ENCODE measurements at regions of chr3 and their contacts with region 1.

Region 1: DNA sequence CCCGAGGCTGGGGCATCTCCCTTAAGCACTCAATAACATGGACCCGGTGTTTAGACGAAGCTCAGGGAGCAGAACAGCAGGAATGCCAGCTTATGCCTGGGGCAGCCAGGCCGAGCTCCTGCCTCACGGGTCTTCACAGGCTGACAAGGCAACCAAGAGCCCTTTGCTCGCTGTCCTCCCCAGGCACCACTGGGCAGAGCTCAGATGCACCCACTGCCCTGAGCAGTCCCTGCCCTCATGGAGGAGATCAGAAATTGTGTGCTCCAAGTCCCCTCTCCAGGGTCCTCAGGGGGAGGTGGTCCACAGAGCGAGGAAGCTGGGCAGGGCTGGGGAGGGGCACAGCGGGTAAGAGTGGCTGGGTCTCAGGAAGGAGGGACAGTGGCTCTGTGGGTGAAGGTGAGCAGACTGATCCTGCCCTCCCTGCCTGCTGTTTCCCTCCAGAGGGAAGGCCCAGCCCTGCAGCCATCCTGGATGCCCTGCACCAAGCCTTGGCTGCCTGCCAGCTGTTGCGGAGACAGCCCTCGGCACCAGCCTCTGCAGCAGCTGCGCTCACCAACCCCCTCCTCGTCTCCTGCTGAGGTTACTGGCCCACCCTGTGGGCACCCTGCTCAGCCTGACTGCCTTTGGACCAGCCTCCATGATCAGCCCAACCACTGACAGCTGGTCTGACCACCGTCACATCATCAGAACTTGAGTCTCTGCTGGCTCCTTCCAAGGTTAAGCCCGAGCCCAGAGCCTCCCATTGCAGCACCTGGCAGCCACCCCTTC is 21.1 kb upstream of the GP9 start:
- DNase-seq: no peak
- ATAC-seq: peak in 6 of 8 donors; percentile 25 to 70 (median 46)
- H3K4me3 ChIP-seq: no peak overlapping the region
- H3K27ac ChIP-seq: no peak overlapping the region
- H3K4me1 ChIP-seq: peaks cover 0 to 5% (median 0%) of the 10 kb centered on the region in 9 donors
- H3K27me3 ChIP-seq: peaks cover 0 to 4% (median 0%) of the 10 kb centered on the region in 7 donors
- CTCF ChIP-seq: no peak

Region 2: DNA sequence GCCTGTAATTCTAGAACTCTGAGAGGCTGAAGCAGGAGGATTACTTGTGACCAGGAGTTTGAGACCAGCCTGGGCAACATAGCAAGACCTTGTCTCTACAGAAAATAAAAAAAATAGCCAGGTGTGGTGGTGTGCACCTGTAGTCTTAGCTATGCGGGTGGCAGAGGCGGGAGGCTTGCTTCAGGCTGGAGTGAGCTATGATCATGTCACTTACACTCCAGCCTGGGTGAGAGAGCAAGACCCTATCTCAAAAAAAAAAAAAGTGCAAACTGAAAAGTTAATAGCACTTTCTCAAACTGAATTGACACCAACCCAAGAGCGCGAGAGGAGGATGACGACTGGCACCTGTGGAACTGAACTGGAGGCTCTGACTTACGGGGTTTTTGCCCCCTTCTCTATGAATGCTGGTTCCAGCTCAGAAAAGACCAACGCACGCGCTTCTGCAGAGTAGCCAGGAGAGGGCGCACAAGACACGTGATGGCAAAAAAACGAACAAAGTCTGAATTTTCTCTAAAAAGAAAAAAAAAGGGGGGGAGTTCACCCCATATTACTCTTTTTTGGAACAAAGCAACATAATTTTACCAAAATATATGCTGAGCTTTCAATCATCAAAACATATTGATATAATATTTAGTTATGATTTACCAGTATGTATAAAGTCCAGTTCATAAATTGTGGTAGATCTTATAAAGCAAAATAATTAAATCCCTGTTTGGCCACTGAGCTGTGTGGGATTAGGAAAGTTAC is 69.3 kb before region 1 on chr3:
- intact Hi-C with region 1: no loop called
- DNase-seq: peak; percentile 29 to 32
- ATAC-seq: peak in 6 of 8 donors; percentile 32 to 66 (median 45)
- H3K4me3 ChIP-seq: no peak overlapping the region
- H3K27ac ChIP-seq: peak overlapping the region in 3 of 10 donors; percentile 68 to 77 (median 70)
- H3K4me1 ChIP-seq: peaks cover 3 to 28% (median 19%) of the 10 kb centered on the region in 9 donors
- H3K27me3 ChIP-seq: no peaks in the 10 kb centered on the region
- CTCF ChIP-seq: peak; percentile 86 to 97 (median 93)

Region 3: DNA sequence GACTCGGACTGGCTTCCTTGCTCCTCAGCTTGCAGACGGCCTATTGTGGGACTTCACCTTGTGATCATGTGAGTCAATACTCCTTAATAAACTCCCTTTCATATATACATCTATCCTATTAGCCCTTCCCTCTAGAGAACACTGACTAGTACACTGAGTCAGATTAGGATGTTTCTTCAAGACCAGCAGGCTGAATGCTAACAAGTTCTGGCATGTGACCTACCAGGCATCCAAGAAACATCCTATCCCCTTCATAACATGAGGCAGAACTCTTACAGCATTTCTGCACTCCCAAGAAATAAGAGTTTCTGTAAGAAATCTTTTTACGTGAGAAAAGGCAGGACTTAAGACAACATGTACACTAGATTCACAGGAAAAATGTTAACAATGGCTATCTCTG is 54.9 kb before region 1 on chr3:
- intact Hi-C with region 1: loop called in 2 of 10 experiments (anchors 10 kb)
- DNase-seq: no peak
- ATAC-seq: no peak
- H3K4me3 ChIP-seq: no peak overlapping the region
- H3K27ac ChIP-seq: no peak overlapping the region
- H3K4me1 ChIP-seq: no peaks in the 10 kb centered on the region
- H3K27me3 ChIP-seq: no peaks in the 10 kb centered on the region
- CTCF ChIP-seq: no peak